ENCODE measurements at regions of chrX and their contacts with region 1.

Region 1: GRCh38 chrX:130120746-130121504 is 10.6 kb upstream of the ELF4 start:
- DNase-seq: peak; percentile 50 to 75 (median 68)
- ATAC-seq: peak; percentile 91
- H3K4me3 ChIP-seq: peak overlapping the region; percentile 53
- H3K4me3 Mint-ChIP-seq: peak overlapping the region; percentile 29 to 74 (median 71)
- H3K27ac ChIP-seq: no peak overlapping the region
- H3K27ac Mint-ChIP-seq: peak overlapping the region in 1 of 9 donors; percentile 58
- H3K4me1 ChIP-seq: no peaks in the 10 kb centered on the region
- H3K4me1 Mint-ChIP-seq: peaks cover 0 to 19% (median 4%) of the 10 kb centered on the region in 7 donors
- H3K27me3 ChIP-seq: no peaks in the 10 kb centered on the region
- H3K27me3 Mint-ChIP-seq: no peaks in the 10 kb centered on the region

Region 2: GRCh38 chrX:130086447-130087206 is 34.3 kb before region 1 on chrX:
- CTCF ChIA-PET with region 1: interaction called, 83 read pairs
- POLR2A ChIA-PET with region 1: interaction called, 6 read pairs
- intact Hi-C with region 1: loop called (anchors 1 kb)
- DNase-seq: peak in 8 of 9 donors; percentile 64 to 79 (median 74)
- ATAC-seq: peak; percentile 74
- H3K4me3 ChIP-seq: peak overlapping the region; percentile 67
- H3K4me3 Mint-ChIP-seq: peak overlapping the region; percentile 86 to 93 (median 89)
- H3K27ac ChIP-seq: peak overlapping the region; percentile 66
- H3K27ac Mint-ChIP-seq: peak overlapping the region; percentile 76 to 96 (median 91)
- H3K4me1 ChIP-seq: peaks cover 22 to 35% of the 10 kb centered on the region in 2 donors
- H3K4me1 Mint-ChIP-seq: peaks cover 15 to 71% (median 60%) of the 10 kb centered on the region in 7 donors
- H3K27me3 ChIP-seq: no peaks in the 10 kb centered on the region
- H3K27me3 Mint-ChIP-seq: no peaks in the 10 kb centered on the region

Region 3: DNA sequence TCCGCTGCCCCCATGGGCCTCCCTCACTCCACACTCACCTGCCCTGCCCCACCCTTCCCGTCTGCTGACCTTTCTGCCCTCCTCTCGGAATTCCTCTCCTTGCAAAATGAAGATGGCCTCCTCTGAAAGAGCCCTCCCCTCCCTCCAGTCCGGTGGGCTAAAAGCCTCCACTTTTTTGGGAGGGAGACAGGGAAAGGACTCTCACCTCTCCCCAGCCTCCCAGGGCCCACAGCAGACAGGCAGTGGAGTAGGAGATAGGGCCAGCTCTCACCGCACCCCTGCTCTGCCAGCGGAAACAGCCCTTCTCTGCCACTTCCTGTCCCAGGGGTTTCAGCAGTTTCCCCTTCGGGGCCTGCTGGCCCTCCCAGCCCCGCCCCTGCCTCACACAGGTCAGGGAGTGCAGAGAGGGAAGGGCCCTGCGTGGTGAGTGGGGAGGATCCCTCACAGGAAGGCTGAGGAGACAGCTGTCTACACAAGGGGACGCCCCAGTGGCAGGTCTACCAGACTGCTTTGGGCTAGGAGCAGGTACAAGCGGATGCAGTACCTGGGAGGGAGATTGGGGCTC is 28.9 kb before region 1 on chrX:
- CTCF ChIA-PET with region 1: interaction called, 54 read pairs
- POLR2A ChIA-PET with region 1: interaction called, 4 read pairs
- intact Hi-C with region 1: loop called (anchors 1 to 2 kb)
- DNase-seq: peak; percentile 46 to 91 (median 87)
- ATAC-seq: peak; percentile 98
- H3K4me3 ChIP-seq: peak overlapping the region; percentile 64
- H3K4me3 Mint-ChIP-seq: peak overlapping the region; percentile 74 to 92 (median 86)
- H3K27ac ChIP-seq: peak overlapping the region; percentile 68
- H3K27ac Mint-ChIP-seq: peak overlapping the region; percentile 89 to 97 (median 95)
- H3K4me1 ChIP-seq: peaks cover 44% of the 10 kb centered on the region in 2 donors
- H3K4me1 Mint-ChIP-seq: peaks cover 13 to 84% (median 52%) of the 10 kb centered on the region in 7 donors
- H3K27me3 ChIP-seq: no peaks in the 10 kb centered on the region
- H3K27me3 Mint-ChIP-seq: no peaks in the 10 kb centered on the region

Region 4: GRCh38 chrX:130097507-130098209 is 23.3 kb before region 1 on chrX:
- CTCF ChIA-PET with region 1: interaction called, 10 read pairs
- POLR2A ChIA-PET with region 1: interaction called, 4 read pairs
- intact Hi-C with region 1: loop called (anchors 1 to 2 kb)
- DNase-seq: peak in 3 of 9 donors; percentile 29 to 54 (median 37)
- ATAC-seq: peak; percentile 89
- H3K4me3 ChIP-seq: peak overlapping the region; percentile 4
- H3K4me3 Mint-ChIP-seq: peak overlapping the region; percentile 60 to 82 (median 66)
- H3K27ac ChIP-seq: peak overlapping the region; percentile 62
- H3K27ac Mint-ChIP-seq: peak overlapping the region; percentile 29 to 94 (median 89)
- H3K4me1 ChIP-seq: peaks cover 43 to 59% of the 10 kb centered on the region in 2 donors
- H3K4me1 Mint-ChIP-seq: peaks cover 17 to 86% (median 57%) of the 10 kb centered on the region in 7 donors
- H3K27me3 ChIP-seq: no peaks in the 10 kb centered on the region
- H3K27me3 Mint-ChIP-seq: no peaks in the 10 kb centered on the region

Region 5: GRCh38 chrX:130110379-130111219 is 10.3 kb before region 1 on chrX and contains the start of gene ELF4:
- CTCF ChIA-PET with region 1: interaction called, 5 read pairs
- POLR2A ChIA-PET with region 1: interaction called, 3 read pairs
- intact Hi-C with region 1: loop called (anchors 1 kb)
- DNase-seq: peak in 7 of 9 donors; percentile 25 to 60 (median 34)
- ATAC-seq: peak; percentile 78
- H3K4me3 ChIP-seq: peak within 1 kb of the TSS; percentile 57
- H3K4me3 Mint-ChIP-seq: peak within 1 kb of the TSS; percentile 79 to 96 (median 90)
- H3K27ac ChIP-seq: peak within 1 kb of the TSS; percentile 77
- H3K27ac Mint-ChIP-seq: peak within 1 kb of the TSS; percentile 41 to 89 (median 75)
- H3K4me1 ChIP-seq: peaks cover 5% of the 10 kb centered on the region in 2 donors
- H3K4me1 Mint-ChIP-seq: peaks cover 10 to 36% (median 31%) of the 10 kb centered on the region in 7 donors
- H3K27me3 ChIP-seq: no peaks in the 10 kb centered on the region
- H3K27me3 Mint-ChIP-seq: no peaks in the 10 kb centered on the region
- total RNA-seq, gene ELF4: 20.7 to 48.9 (median 23.7) TPM

Region 6: DNA sequence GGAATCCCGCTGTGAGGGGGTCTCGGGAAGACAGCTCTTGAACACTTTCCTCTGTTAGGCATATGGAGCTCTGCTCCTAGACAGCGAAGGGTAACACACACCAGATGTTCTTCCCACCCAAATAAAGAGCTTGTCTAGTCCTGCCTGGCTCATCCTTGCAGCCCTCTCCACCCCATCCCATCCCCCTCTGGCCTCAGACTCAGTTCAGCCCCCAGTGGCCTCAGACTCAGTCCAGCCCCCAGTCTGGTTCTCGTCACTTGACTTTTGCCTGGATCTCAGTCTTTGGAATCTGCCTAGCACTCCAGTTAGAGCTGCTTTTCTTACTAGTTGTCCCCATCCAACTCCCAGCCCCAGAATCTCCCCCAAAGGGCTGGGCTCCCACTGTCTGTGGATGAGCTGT is 65.7 kb after region 1 on chrX:
- CTCF ChIA-PET with region 1: interaction called, 12 read pairs
- POLR2A ChIA-PET with region 1: no interaction called
- intact Hi-C with region 1: no loop called
- DNase-seq: no peak
- ATAC-seq: no peak
- H3K4me3 ChIP-seq: no peak overlapping the region
- H3K4me3 Mint-ChIP-seq: no peak overlapping the region
- H3K27ac ChIP-seq: no peak overlapping the region
- H3K27ac Mint-ChIP-seq: peak overlapping the region in 1 of 9 donors; percentile 43
- H3K4me1 ChIP-seq: peaks cover 6 to 13% of the 10 kb centered on the region in 2 donors
- H3K4me1 Mint-ChIP-seq: peaks cover 3 to 26% (median 13%) of the 10 kb centered on the region in 7 donors
- H3K27me3 ChIP-seq: no peaks in the 10 kb centered on the region
- H3K27me3 Mint-ChIP-seq: no peaks in the 10 kb centered on the region

Region 7: GRCh38 chrX:130196466-130196865 is 75.5 kb after region 1 on chrX:
- CTCF ChIA-PET with region 1: interaction called, 12 read pairs
- POLR2A ChIA-PET with region 1: no interaction called
- intact Hi-C with region 1: loop called (anchors 1 to 2 kb)
- DNase-seq: no peak
- ATAC-seq: no peak
- H3K4me3 ChIP-seq: no peak overlapping the region
- H3K4me3 Mint-ChIP-seq: no peak overlapping the region
- H3K27ac ChIP-seq: no peak overlapping the region
- H3K27ac Mint-ChIP-seq: peak overlapping the region in 1 of 9 donors; percentile 38
- H3K4me1 ChIP-seq: no peaks in the 10 kb centered on the region
- H3K4me1 Mint-ChIP-seq: peaks cover 0 to 4% (median 0%) of the 10 kb centered on the region in 7 donors
- H3K27me3 ChIP-seq: no peaks in the 10 kb centered on the region
- H3K27me3 Mint-ChIP-seq: no peaks in the 10 kb centered on the region